A673 (cell line): ENCODE measurements at regions of chr11 and their contacts with region 1.

Region 1: GRCh38 chr11:10669258-10670033 is 24.1 kb downstream of the IRAG1 start:
- DNase-seq: peak; percentile 51
- H3K4me3 ChIP-seq: no peak overlapping the region
- H3K27ac ChIP-seq: peak overlapping the region; percentile 19
- H3K4me1 ChIP-seq: peaks cover 18% of the 10 kb centered on the region
- H3K27me3 ChIP-seq: no peaks in the 10 kb centered on the region
- CTCF ChIP-seq: no peak

Region 2: DNA sequence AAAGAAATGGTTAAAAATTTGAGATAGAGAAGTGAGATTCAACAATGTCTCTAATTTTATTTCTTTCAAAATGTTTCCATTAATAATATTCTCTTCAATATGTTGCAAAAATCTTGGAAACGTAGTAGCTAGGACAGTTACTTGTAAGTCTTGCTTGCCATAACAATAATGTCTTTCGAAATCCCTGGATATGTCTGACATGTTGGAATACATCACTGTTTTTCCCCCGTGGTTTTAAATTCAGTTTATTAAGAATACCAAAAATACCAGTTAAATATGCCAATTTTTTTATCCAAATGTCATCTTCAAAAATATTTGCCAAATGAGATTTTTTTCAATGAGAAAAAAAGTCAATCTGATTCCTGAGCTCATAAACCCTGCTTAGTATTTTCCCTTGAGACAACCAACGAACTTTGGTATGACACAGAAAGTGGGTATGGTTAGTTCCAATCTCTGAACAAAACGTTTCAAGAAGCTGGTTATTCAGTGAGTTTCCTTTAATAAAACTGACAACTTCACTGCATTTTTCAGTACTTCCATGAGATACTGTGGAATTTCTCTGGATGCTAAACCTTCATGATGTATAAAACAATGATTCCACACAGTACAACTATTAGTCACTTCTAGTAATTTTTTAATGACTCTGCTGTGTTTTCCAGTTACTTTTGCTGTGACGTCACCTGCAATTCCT is 251.0 kb before region 1 on chr11:
- CTCF ChIA-PET with region 1: no interaction called
- POLR2A ChIA-PET with region 1: no interaction called
- intact Hi-C with region 1: no loop called
- DNase-seq: no peak
- H3K4me3 ChIP-seq: no peak overlapping the region
- H3K27ac ChIP-seq: no peak overlapping the region
- H3K4me1 ChIP-seq: peaks cover 31% of the 10 kb centered on the region
- H3K27me3 ChIP-seq: no peaks in the 10 kb centered on the region
- CTCF ChIP-seq: no peak

Region 3: DNA sequence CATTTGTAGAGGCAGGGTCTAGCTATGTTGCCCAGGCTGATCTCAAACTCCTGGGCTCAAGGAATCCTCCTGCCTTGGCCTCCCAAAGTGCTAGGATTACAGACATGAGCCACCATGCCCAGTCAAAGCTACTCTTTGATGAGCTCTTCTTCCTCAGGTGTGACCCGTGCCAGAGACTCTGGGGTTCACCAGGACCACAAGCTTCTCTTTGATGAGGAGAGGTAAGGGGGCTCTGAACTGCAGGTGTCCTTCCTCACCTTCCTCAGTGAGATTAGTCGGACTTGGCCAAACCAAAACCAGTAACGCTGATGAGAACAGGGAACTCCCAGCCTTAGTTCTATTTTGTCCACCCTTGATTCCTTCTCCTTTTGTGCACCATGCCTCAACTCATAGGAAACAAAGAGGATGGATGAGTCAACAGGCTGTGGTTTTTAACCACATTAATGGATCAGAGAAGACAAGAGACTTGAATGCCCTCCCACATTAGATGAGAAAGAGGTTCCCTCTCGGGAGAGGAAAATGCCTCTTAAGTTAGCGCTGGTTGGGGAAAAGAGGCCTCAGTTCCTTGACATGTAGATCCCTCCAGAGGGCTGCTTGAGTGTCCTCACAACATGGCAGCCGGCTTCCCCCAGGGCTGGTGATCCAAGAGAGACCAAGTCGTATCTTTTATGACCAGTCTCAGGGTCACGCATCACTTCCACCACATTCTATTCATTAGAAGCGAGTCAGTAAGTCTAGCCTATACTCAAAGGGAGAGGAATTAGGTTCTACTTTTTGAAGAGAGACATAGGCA is 55.9 kb after region 1 on chr11:
- CTCF ChIA-PET with region 1: no interaction called
- POLR2A ChIA-PET with region 1: no interaction called
- intact Hi-C with region 1: loop called (anchors 5 kb)
- DNase-seq: peak; percentile 57
- H3K4me3 ChIP-seq: no peak overlapping the region
- H3K27ac ChIP-seq: no peak overlapping the region
- H3K4me1 ChIP-seq: peaks cover 30% of the 10 kb centered on the region
- H3K27me3 ChIP-seq: no peaks in the 10 kb centered on the region
- CTCF ChIP-seq: no peak